ENCODE measurements at regions of chr3 and their contacts with region 1.

Region 1: GRCh38 chr3:12891985-12892839 is 50.8 kb upstream of the RPL32 start:
- DNase-seq: peak; percentile 18 to 54
- ATAC-seq: peak; percentile 39 to 73 (median 62)
- H3K4me3 ChIP-seq: peak overlapping the region; percentile 26
- H3K27ac ChIP-seq: peak overlapping the region; percentile 10
- H3K4me1 ChIP-seq: peaks cover 18% of the 10 kb centered on the region
- H3K27me3 ChIP-seq: no peaks in the 10 kb centered on the region
- CTCF ChIP-seq: peak; percentile 86

Region 2: GRCh38 chr3:12706504-12707253 is 185.5 kb before region 1 on chr3:
- intact Hi-C with region 1: loop called in 1 of 2 experiments (anchors 5 kb)
- DNase-seq: peak; percentile 31 to 58
- ATAC-seq: peak; percentile 84 to 93 (median 87)
- H3K4me3 ChIP-seq: no peak overlapping the region
- H3K27ac ChIP-seq: peak overlapping the region; percentile 21
- H3K4me1 ChIP-seq: peaks cover 11% of the 10 kb centered on the region
- H3K27me3 ChIP-seq: no peaks in the 10 kb centered on the region
- CTCF ChIP-seq: peak; percentile 80

Region 3: GRCh38 chr3:12845811-12846210 is 46.4 kb before region 1 on chr3:
- intact Hi-C with region 1: loop called in 1 of 2 experiments (anchors 5 kb)
- DNase-seq: no peak
- ATAC-seq: no peak
- H3K4me3 ChIP-seq: no peak overlapping the region
- H3K27ac ChIP-seq: peak overlapping the region; percentile 61
- H3K4me1 ChIP-seq: peaks cover 20% of the 10 kb centered on the region
- H3K27me3 ChIP-seq: no peaks in the 10 kb centered on the region
- CTCF ChIP-seq: no peak